Calu3 (cell line): ENCODE measurements at regions of chr3 and their contacts with region 1.

Region 1: GRCh38 chr3:136545664-136546268 is 206.4 kb downstream of the STAG1 start:
- DNase-seq: peak; percentile 19
- H3K4me3 Mint-ChIP-seq: no peak overlapping the region
- H3K27ac Mint-ChIP-seq: peak overlapping the region; percentile 40
- H3K4me1 Mint-ChIP-seq: peaks cover 31% of the 10 kb centered on the region
- H3K27me3 Mint-ChIP-seq: no peaks in the 10 kb centered on the region
- CTCF ChIP-seq: peak; percentile 36

Region 2: GRCh38 chr3:136305878-136306277 is 239.9 kb before region 1 on chr3:
- CTCF ChIA-PET with region 1: interaction called, 4 read pairs
- intact Hi-C with region 1: loop called (anchors 1 kb)
- DNase-seq: peak; percentile 33
- H3K4me3 Mint-ChIP-seq: no peak overlapping the region
- H3K27ac Mint-ChIP-seq: no peak overlapping the region
- H3K4me1 Mint-ChIP-seq: no peaks in the 10 kb centered on the region
- H3K27me3 Mint-ChIP-seq: no peaks in the 10 kb centered on the region
- CTCF ChIP-seq: peak; percentile 65

Region 3: GRCh38 chr3:136444581-136444980 is 101.2 kb before region 1 on chr3:
- CTCF ChIA-PET with region 1: no interaction called
- intact Hi-C with region 1: no loop called
- DNase-seq: no peak
- H3K4me3 Mint-ChIP-seq: no peak overlapping the region
- H3K27ac Mint-ChIP-seq: no peak overlapping the region
- H3K4me1 Mint-ChIP-seq: no peaks in the 10 kb centered on the region
- H3K27me3 Mint-ChIP-seq: no peaks in the 10 kb centered on the region
- CTCF ChIP-seq: no peak

Region 4: GRCh38 chr3:136490646-136491405 is 54.9 kb before region 1 on chr3:
- CTCF ChIA-PET with region 1: interaction called, 10 read pairs
- intact Hi-C with region 1: no loop called
- DNase-seq: no peak
- H3K4me3 Mint-ChIP-seq: no peak overlapping the region
- H3K27ac Mint-ChIP-seq: no peak overlapping the region
- H3K4me1 Mint-ChIP-seq: no peaks in the 10 kb centered on the region
- H3K27me3 Mint-ChIP-seq: no peaks in the 10 kb centered on the region
- CTCF ChIP-seq: no peak

Region 5: GRCh38 chr3:136512381-136512780 is 33.4 kb before region 1 on chr3:
- CTCF ChIA-PET with region 1: no interaction called
- intact Hi-C with region 1: no loop called
- DNase-seq: no peak
- H3K4me3 Mint-ChIP-seq: no peak overlapping the region
- H3K27ac Mint-ChIP-seq: no peak overlapping the region
- H3K4me1 Mint-ChIP-seq: no peaks in the 10 kb centered on the region
- H3K27me3 Mint-ChIP-seq: no peaks in the 10 kb centered on the region
- CTCF ChIP-seq: no peak

Region 6: DNA sequence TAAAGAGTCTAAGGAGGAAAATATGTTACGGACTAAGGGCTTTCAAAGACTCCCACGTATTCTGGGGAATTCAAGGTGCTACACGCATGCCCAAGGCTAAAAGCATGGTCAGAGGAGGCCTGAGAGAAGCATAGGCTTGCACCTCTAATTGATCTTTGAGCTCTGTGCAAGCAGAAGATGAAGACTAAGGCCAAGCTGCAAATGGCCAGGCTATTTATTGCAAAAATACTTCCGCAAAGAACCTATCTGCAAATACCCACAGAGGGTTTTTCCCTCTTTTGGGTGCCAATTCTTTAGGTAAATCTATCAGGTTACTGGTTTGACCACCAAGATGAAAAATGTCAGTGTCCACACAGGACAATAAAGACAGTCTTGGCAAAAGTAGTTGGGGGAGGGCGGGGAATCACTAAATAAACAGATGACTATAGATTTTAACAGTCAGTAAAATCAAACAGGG is 86.9 kb after region 1 on chr3:
- CTCF ChIA-PET with region 1: no interaction called
- intact Hi-C with region 1: no loop called
- DNase-seq: peak; percentile 67
- H3K4me3 Mint-ChIP-seq: peak overlapping the region; percentile 3
- H3K27ac Mint-ChIP-seq: peak overlapping the region; percentile 37
- H3K4me1 Mint-ChIP-seq: peaks cover 52% of the 10 kb centered on the region
- H3K27me3 Mint-ChIP-seq: no peaks in the 10 kb centered on the region
- CTCF ChIP-seq: no peak

Region 7: DNA sequence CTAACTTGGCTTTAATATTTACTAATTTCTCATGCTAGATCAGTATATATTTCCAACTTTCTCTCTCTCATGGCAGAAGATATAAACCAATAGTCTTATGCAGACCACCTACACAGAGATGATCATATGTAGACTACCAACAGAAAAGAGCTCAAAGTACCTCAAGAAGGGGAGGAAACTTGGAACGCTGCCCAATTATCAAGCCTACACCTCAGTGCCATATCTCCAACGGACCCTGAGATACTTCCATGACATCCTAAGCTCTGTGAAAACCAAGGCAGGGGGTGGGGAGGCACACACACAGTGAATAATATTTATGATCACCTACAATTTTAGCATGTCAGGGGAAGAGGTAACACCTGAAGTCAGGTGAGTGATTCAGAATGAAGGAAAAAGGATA is 105.8 kb after region 1 on chr3:
- CTCF ChIA-PET with region 1: no interaction called
- intact Hi-C with region 1: no loop called
- DNase-seq: no peak
- H3K4me3 Mint-ChIP-seq: no peak overlapping the region
- H3K27ac Mint-ChIP-seq: no peak overlapping the region
- H3K4me1 Mint-ChIP-seq: peaks cover 20% of the 10 kb centered on the region
- H3K27me3 Mint-ChIP-seq: no peaks in the 10 kb centered on the region
- CTCF ChIP-seq: no peak

Region 8: GRCh38 chr3:136734382-136735070 is 188.8 kb after region 1 on chr3:
- CTCF ChIA-PET with region 1: no interaction called
- intact Hi-C with region 1: loop called (anchors 5 kb)
- DNase-seq: no peak
- H3K4me3 Mint-ChIP-seq: peak overlapping the region; percentile 2
- H3K27ac Mint-ChIP-seq: peak overlapping the region; percentile 20
- H3K4me1 Mint-ChIP-seq: peaks cover 34% of the 10 kb centered on the region
- H3K27me3 Mint-ChIP-seq: no peaks in the 10 kb centered on the region
- CTCF ChIP-seq: no peak

Region 9: DNA sequence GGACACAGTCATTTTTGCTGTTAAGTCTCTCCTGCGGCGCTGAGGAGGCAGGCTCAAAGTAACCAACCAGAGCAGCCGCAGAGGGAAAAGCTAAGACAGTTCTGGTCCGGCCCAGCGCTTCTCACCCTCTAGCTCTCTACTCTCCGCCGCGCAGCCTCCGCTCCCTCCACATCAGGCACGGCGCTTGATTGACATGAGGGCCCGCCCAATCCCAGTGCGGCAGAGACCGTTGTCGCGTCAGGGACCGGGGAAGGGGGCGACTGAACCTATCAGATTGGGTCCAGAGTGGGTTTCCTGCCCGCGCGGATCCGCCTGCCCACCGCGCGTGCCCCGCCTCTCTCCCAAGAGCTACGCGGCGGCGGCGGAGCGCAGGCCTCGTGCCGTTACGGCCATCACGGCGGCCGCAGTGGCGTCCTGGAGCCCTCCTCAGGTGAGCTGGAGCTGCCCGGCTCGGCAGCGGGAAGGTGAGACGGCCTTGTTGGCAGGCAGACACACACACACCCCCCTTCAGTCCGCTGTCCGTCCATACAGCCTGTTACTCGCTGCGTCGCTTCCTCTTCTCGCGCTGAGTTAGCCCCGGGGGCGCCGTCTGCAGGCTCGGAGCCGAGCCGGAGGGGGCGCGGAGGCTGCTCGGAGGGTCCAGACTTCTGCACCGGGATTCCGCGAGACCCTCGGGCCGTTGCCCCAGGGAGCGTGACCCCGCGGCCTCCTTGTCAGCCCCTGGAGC is 316.3 kb after region 1 on chr3 and contains the start of gene NCK1:
- CTCF ChIA-PET with region 1: interaction called, 4 read pairs
- intact Hi-C with region 1: loop called (anchors 5 kb)
- DNase-seq: peak; percentile 100
- H3K4me3 Mint-ChIP-seq: peak within 1 kb of the TSS; percentile 99
- H3K27ac Mint-ChIP-seq: peak within 1 kb of the TSS; percentile 89
- H3K4me1 Mint-ChIP-seq: peaks cover 47% of the 10 kb centered on the region
- H3K27me3 Mint-ChIP-seq: no peaks in the 10 kb centered on the region
- CTCF ChIP-seq: no peak
- total RNA-seq, gene NCK1: 108 and 127 TPM in 2 replicates

Region 10: DNA sequence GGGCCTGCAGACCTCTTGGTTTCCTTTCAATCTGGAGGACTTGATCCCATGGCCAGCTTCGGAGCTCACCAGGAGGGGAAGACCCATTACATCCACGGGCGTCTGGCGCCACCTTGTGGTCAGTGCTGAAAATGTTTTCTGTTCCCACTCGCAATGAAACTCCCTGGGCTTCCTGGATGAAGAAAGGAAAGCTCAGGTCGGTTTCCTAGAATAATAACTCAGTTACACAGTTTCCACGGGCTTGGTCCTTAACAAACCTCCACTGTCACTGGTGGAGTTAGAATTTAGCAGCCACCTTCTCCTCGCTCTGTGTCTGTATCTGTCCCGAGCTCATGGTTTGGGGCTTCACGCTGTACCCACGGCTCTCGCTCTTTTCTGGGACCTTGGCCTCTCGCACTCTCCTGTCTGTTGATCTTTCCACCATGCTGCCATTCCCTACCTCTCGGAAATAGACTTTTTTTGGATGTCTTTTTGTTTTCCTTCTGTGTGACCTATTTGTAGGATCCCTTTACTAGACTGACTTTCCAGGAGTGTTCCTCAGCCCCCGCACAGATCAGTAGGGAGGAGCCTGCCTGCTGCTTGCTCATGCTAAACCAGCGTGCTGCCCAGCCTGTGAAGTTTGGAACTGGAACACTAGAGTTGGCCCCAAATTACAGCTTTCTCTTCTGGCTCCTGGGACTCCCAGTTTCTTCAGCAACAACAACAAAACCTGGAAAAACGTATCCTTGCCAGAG is 468.4 kb after region 1 on chr3:
- CTCF ChIA-PET with region 1: interaction called, 15 read pairs
- intact Hi-C with region 1: loop called (anchors 1 kb)
- DNase-seq: peak; percentile 97
- H3K4me3 Mint-ChIP-seq: peak overlapping the region; percentile 68
- H3K27ac Mint-ChIP-seq: peak overlapping the region; percentile 34
- H3K4me1 Mint-ChIP-seq: peaks cover 14% of the 10 kb centered on the region
- H3K27me3 Mint-ChIP-seq: no peaks in the 10 kb centered on the region
- CTCF ChIP-seq: peak; percentile 97